Mammary epithelial cell (primary cell): ENCODE measurements at regions of chr20 and their contacts with region 1.

Region 1: DNA sequence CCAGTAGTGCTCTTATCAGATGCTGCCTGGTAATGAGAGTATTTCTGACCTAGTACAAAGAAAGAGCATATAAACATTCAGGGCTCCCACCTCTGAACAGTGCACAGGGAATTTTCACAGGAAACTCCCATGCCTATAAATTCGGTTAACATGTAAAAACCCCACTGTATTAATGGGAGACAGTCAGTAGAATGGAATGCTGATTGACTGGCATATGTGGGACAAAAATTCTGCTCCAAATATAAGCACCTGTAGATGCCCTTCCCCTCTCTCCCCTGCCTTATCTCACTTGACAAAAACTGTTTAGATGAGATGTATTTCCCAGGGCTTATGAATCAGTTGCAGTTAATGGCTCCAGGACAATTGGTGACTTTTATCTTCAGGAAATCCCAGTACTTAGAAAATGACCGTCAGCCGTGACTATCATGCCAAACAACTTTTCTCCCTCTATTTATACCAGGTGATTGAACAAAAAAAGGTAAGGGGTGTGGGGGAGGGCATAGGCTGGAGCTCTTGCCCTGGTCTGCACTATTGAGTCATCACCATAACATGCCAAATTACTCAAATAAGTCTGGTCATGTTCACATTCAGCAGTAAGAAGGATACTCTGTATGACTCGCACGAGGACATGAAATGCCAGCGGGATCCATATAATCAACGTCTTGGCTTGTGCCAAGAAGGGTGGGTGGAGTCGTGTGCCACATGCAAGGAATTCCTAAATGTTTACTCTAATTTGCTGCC is 176.4 kb upstream of the BMP2 start:
- DNase-seq: peak; percentile 99
- H3K4me3 ChIP-seq: no peak overlapping the region
- H3K27ac ChIP-seq: peak overlapping the region; percentile 96
- H3K4me1 ChIP-seq: peaks cover 22% of the 10 kb centered on the region
- H3K27me3 ChIP-seq: no peaks in the 10 kb centered on the region
- CTCF ChIP-seq: no peak

Region 2: GRCh38 chr20:6492271-6493055 is 98.6 kb before region 1 on chr20:
- CTCF ChIA-PET with region 1: no interaction called
- dilution Hi-C with region 1: no loop called
- in situ Hi-C with region 1: no loop called
- intact Hi-C with region 1: no loop called
- DNase-seq: peak; percentile 89
- H3K4me3 ChIP-seq: peak overlapping the region in 1 of 3 experiments; percentile 18
- H3K27ac ChIP-seq: peak overlapping the region; percentile 66
- H3K4me1 ChIP-seq: peaks cover 10% of the 10 kb centered on the region
- H3K27me3 ChIP-seq: no peaks in the 10 kb centered on the region
- CTCF ChIP-seq: no peak

Region 3: GRCh38 chr20:6566821-6567220 is 24.2 kb before region 1 on chr20:
- CTCF ChIA-PET with region 1: interaction called, 3 read pairs
- dilution Hi-C with region 1: no loop called
- in situ Hi-C with region 1: no loop called
- intact Hi-C with region 1: loop called (anchors 1 kb)
- DNase-seq: peak; percentile 97
- H3K4me3 ChIP-seq: no peak overlapping the region
- H3K27ac ChIP-seq: peak overlapping the region; percentile 6
- H3K4me1 ChIP-seq: peaks cover 20% of the 10 kb centered on the region
- H3K27me3 ChIP-seq: no peaks in the 10 kb centered on the region
- CTCF ChIP-seq: peak in 1 of 2 donors; percentile 23

Region 4: GRCh38 chr20:6651016-6651415 is 60.0 kb after region 1 on chr20:
- CTCF ChIA-PET with region 1: no interaction called
- dilution Hi-C with region 1: loop called (anchors 5 kb)
- in situ Hi-C with region 1: no loop called
- intact Hi-C with region 1: no loop called
- DNase-seq: peak; percentile 98
- H3K4me3 ChIP-seq: no peak overlapping the region
- H3K27ac ChIP-seq: peak overlapping the region; percentile 35
- H3K4me1 ChIP-seq: peaks cover 36% of the 10 kb centered on the region
- H3K27me3 ChIP-seq: no peaks in the 10 kb centered on the region
- CTCF ChIP-seq: no peak